Heart left ventricle (tissue), 16 donors: ENCODE measurements at regions of chr3 and their contacts with region 1.

Region 1: GRCh38 chr3:53921296-53921695 is 29.6 kb upstream of the SELENOK start:
- DNase-seq: no peak
- ATAC-seq: no peak
- H3K4me3 ChIP-seq: no peak overlapping the region
- H3K27ac ChIP-seq: no peak overlapping the region
- H3K4me1 ChIP-seq: no peaks in the 10 kb centered on the region
- H3K27me3 ChIP-seq: peaks cover 0 to 18% (median 0%) of the 10 kb centered on the region in 9 donors
- CTCF ChIP-seq: peak in 11 of 12 donors; percentile 21 to 53 (median 36)
- POLR2A ChIP-seq: no peak

Region 2: GRCh38 chr3:53677413-53677812 is 243.9 kb before region 1 on chr3:
- intact Hi-C with region 1: loop called in 1 of 10 experiments (anchors 5 kb)
- DNase-seq: peak in 1 of 5 donors; percentile 19
- ATAC-seq: peak; percentile 40 to 87 (median 82)
- H3K4me3 ChIP-seq: no peak overlapping the region
- H3K27ac ChIP-seq: no peak overlapping the region
- H3K4me1 ChIP-seq: peaks cover 0 to 6% (median 0%) of the 10 kb centered on the region in 12 donors
- H3K27me3 ChIP-seq: peaks cover 0 to 29% (median 2%) of the 10 kb centered on the region in 9 donors
- CTCF ChIP-seq: peak in 11 of 12 donors; percentile 16 to 54 (median 35)
- POLR2A ChIP-seq: no peak